ENCODE measurements at regions of chr6 and their contacts with region 1.

Region 1: GRCh38 chr6:75526502-75527127 is 33.0 kb upstream of the FILIP1 start:
- DNase-seq: peak in 8 of 9 donors; percentile 30 to 65 (median 57)
- ATAC-seq: peak; percentile 91
- H3K4me3 ChIP-seq: no peak overlapping the region
- H3K4me3 Mint-ChIP-seq: no peak overlapping the region
- H3K27ac ChIP-seq: no peak overlapping the region
- H3K27ac Mint-ChIP-seq: no peak overlapping the region
- H3K4me1 ChIP-seq: no peaks in the 10 kb centered on the region
- H3K4me1 Mint-ChIP-seq: no peaks in the 10 kb centered on the region
- H3K27me3 ChIP-seq: peaks cover 0 to 3% of the 10 kb centered on the region in 2 donors
- H3K27me3 Mint-ChIP-seq: peaks cover 15 to 44% (median 27%) of the 10 kb centered on the region in 5 donors

Region 2: GRCh38 chr6:73665686-73666319 is 1860.8 kb before region 1 on chr6:
- CTCF ChIA-PET with region 1: no interaction called
- POLR2A ChIA-PET with region 1: no interaction called
- intact Hi-C with region 1: no loop called
- DNase-seq: no peak
- ATAC-seq: no peak
- H3K4me3 ChIP-seq: no peak overlapping the region
- H3K4me3 Mint-ChIP-seq: no peak overlapping the region
- H3K27ac ChIP-seq: no peak overlapping the region
- H3K27ac Mint-ChIP-seq: no peak overlapping the region
- H3K4me1 ChIP-seq: no peaks in the 10 kb centered on the region
- H3K4me1 Mint-ChIP-seq: peaks cover 0 to 5% (median 0%) of the 10 kb centered on the region in 7 donors
- H3K27me3 ChIP-seq: no peaks in the 10 kb centered on the region
- H3K27me3 Mint-ChIP-seq: peaks cover 11 to 32% (median 29%) of the 10 kb centered on the region in 5 donors

Region 3: GRCh38 chr6:73739096-73739495 is 1787.5 kb before region 1 on chr6:
- CTCF ChIA-PET with region 1: no interaction called
- POLR2A ChIA-PET with region 1: no interaction called
- intact Hi-C with region 1: loop called in 1 of 2 experiments (anchors 1 kb)
- DNase-seq: peak in 7 of 9 donors; percentile 31 to 69 (median 57)
- ATAC-seq: peak; percentile 76
- H3K4me3 ChIP-seq: no peak overlapping the region
- H3K4me3 Mint-ChIP-seq: no peak overlapping the region
- H3K27ac ChIP-seq: no peak overlapping the region
- H3K27ac Mint-ChIP-seq: no peak overlapping the region
- H3K4me1 ChIP-seq: no peaks in the 10 kb centered on the region
- H3K4me1 Mint-ChIP-seq: peaks cover 0 to 4% (median 0%) of the 10 kb centered on the region in 7 donors
- H3K27me3 ChIP-seq: no peaks in the 10 kb centered on the region
- H3K27me3 Mint-ChIP-seq: peaks cover 0 to 4% (median 0%) of the 10 kb centered on the region in 5 donors

Region 4: GRCh38 chr6:75243333-75244062 is 283.1 kb before region 1 on chr6 and contains the start of gene COX7A2:
- CTCF ChIA-PET with region 1: no interaction called
- POLR2A ChIA-PET with region 1: no interaction called
- intact Hi-C with region 1: loop called in 1 of 2 experiments (anchors 1 kb)
- DNase-seq: peak; percentile 66 to 91 (median 83)
- ATAC-seq: peak; percentile 98
- H3K4me3 ChIP-seq: peak within 1 kb of the TSS; percentile 84
- H3K4me3 Mint-ChIP-seq: peak within 1 kb of the TSS; percentile 88 to 99 (median 98)
- H3K27ac ChIP-seq: peak within 1 kb of the TSS; percentile 90
- H3K27ac Mint-ChIP-seq: peak within 1 kb of the TSS; percentile 94 to 100 (median 98)
- H3K4me1 ChIP-seq: peaks cover 10 to 11% of the 10 kb centered on the region in 2 donors
- H3K4me1 Mint-ChIP-seq: peaks cover 9 to 53% (median 33%) of the 10 kb centered on the region in 7 donors
- H3K27me3 ChIP-seq: no peaks in the 10 kb centered on the region
- H3K27me3 Mint-ChIP-seq: peaks cover 0 to 17% (median 15%) of the 10 kb centered on the region in 5 donors
- total RNA-seq, gene COX7A2: 159 to 395 (median 183) TPM

Region 5: GRCh38 chr6:75296811-75297779 is 229.5 kb before region 1 on chr6:
- CTCF ChIA-PET with region 1: no interaction called
- POLR2A ChIA-PET with region 1: no interaction called
- intact Hi-C with region 1: loop called (anchors 1 kb)
- DNase-seq: peak in 7 of 9 donors; percentile 16 to 65 (median 46)
- ATAC-seq: peak; percentile 75
- H3K4me3 ChIP-seq: no peak overlapping the region
- H3K4me3 Mint-ChIP-seq: no peak overlapping the region
- H3K27ac ChIP-seq: no peak overlapping the region
- H3K27ac Mint-ChIP-seq: no peak overlapping the region
- H3K4me1 ChIP-seq: no peaks in the 10 kb centered on the region
- H3K4me1 Mint-ChIP-seq: peaks cover 0 to 2% (median 0%) of the 10 kb centered on the region in 7 donors
- H3K27me3 ChIP-seq: no peaks in the 10 kb centered on the region
- H3K27me3 Mint-ChIP-seq: peaks cover 0 to 2% (median 0%) of the 10 kb centered on the region in 5 donors

Region 6: GRCh38 chr6:75601304-75602245 is 75.0 kb after region 1 on chr6 and contains the start of gene SENP6:
- CTCF ChIA-PET with region 1: no interaction called
- POLR2A ChIA-PET with region 1: no interaction called
- intact Hi-C with region 1: loop called in 1 of 2 experiments (anchors 5 kb)
- DNase-seq: peak; percentile 68 to 81 (median 79)
- ATAC-seq: peak; percentile 80
- H3K4me3 ChIP-seq: peak within 1 kb of the TSS; percentile 87
- H3K4me3 Mint-ChIP-seq: peak within 1 kb of the TSS; percentile 78 to 100 (median 99)
- H3K27ac ChIP-seq: peak within 1 kb of the TSS; percentile 97
- H3K27ac Mint-ChIP-seq: peak within 1 kb of the TSS; percentile 97 to 99 (median 98)
- H3K4me1 ChIP-seq: peaks cover 26 to 37% of the 10 kb centered on the region in 2 donors
- H3K4me1 Mint-ChIP-seq: peaks cover 44 to 80% (median 72%) of the 10 kb centered on the region in 7 donors
- H3K27me3 ChIP-seq: no peaks in the 10 kb centered on the region
- H3K27me3 Mint-ChIP-seq: no peaks in the 10 kb centered on the region
- total RNA-seq, gene SENP6: 77.9 to 132 (median 124) TPM

Region 7: GRCh38 chr6:76724760-76725159 is 1198.1 kb after region 1 on chr6:
- CTCF ChIA-PET with region 1: no interaction called
- POLR2A ChIA-PET with region 1: no interaction called
- intact Hi-C with region 1: no loop called
- DNase-seq: no peak
- ATAC-seq: no peak
- H3K4me3 ChIP-seq: no peak overlapping the region
- H3K4me3 Mint-ChIP-seq: no peak overlapping the region
- H3K27ac ChIP-seq: no peak overlapping the region
- H3K27ac Mint-ChIP-seq: no peak overlapping the region
- H3K4me1 ChIP-seq: no peaks in the 10 kb centered on the region
- H3K4me1 Mint-ChIP-seq: peaks cover 0 to 2% (median 0%) of the 10 kb centered on the region in 7 donors
- H3K27me3 ChIP-seq: no peaks in the 10 kb centered on the region
- H3K27me3 Mint-ChIP-seq: no peaks in the 10 kb centered on the region

Measured in naive thymus-derived CD4-positive, alpha-beta T cell (primary cell).